BJ (cell line): ENCODE measurements at regions of chr11 and their contacts with region 1.

Region 1: GRCh38 chr11:73661035-73661628 is 14.8 kb downstream of the PLEKHB1 start:
- DNase-seq: peak; percentile 20
- H3K4me3 ChIP-seq: peak overlapping the region; percentile 40
- H3K27me3 ChIP-seq: no peaks in the 10 kb centered on the region
- CTCF ChIP-seq: peak; percentile 96

Region 2: DNA sequence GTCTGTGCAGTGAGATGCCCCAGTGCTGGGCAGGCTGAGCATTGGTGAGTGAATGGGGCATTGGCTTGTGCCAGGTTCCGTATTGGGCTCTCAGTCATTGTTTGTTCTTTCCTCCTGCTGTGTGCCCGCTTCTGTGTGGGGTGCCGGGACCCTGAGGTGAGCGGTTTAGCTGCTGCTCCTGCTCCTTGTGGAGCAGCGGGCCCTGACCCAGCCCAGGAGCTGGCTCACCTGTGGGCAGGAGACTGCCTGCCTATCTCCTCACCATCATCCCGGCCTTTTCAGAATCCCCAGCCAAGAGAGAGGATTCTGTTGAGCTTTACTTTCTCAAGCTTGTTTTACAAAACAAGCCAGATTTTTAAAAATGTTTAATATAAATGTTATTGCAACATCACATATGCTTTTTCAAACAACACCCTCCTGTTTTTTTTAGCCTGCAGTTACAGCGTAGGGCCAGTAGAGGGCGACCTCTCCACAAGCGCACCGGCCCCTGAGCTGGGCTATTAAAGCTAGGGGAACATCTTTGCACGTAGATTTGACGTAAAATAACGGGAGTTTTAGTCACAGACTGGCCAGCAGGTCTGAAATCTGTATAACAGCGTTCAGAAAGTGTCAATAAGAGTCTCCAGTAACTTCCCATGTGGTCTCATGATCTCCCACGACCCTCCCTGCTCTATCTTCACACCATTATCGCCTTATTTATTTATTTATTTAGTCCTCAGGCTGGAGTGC is 310.1 kb before region 1 on chr11:
- CTCF ChIA-PET with region 1: interaction called, 33 read pairs
- POLR2A ChIA-PET with region 1: no interaction called
- DNase-seq: no peak
- H3K4me3 ChIP-seq: no peak overlapping the region
- H3K27me3 ChIP-seq: no peaks in the 10 kb centered on the region
- CTCF ChIP-seq: peak; percentile 100

Region 3: DNA sequence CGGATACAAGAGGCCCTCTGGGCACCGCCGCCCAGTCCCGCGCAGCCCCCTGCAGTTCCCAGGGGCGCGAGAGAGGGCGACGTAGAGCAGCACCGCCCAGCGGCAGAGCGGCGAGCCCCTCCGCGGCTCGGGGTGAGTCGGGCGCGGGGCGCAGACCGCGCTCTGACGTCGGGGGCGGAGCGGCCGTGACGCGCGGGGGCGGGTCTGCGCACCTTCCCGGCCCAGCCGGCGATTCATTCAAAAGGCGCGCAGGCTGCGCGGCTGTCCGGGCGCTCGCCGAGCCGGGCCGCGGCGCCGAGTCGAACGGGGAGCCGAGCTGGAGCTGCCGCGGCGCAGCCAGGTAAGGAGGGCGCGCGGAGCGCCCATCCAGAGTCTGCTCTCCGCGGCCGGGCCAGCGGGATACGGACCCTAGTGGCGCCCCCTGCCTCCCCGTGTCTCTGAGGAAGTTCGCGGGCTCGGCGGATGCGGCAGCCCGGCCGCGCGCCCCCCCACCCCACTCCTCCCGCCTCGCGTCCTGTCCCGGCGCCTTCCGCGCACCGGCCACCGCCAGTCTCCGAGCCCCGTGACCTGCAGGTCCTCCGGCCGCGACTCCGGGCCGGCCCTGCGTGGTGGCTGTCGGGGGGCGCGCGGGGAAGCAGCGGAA is 284.9 kb before region 1 on chr11 and contains the start of gene RELT:
- CTCF ChIA-PET with region 1: interaction called, 11 read pairs
- POLR2A ChIA-PET with region 1: no interaction called
- DNase-seq: peak; percentile 34
- H3K4me3 ChIP-seq: peak within 1 kb of the TSS; percentile 70
- H3K27me3 ChIP-seq: no peaks in the 10 kb centered on the region
- CTCF ChIP-seq: peak; percentile 80
- polyA plus RNA-seq, gene RELT: 2.4 and 3.7 TPM in 2 replicates

Region 4: GRCh38 chr11:73393479-73394380 is 267.4 kb before region 1 on chr11:
- CTCF ChIA-PET with region 1: interaction called, 100 read pairs
- POLR2A ChIA-PET with region 1: no interaction called
- DNase-seq: no peak
- H3K4me3 ChIP-seq: no peak overlapping the region
- H3K27me3 ChIP-seq: no peaks in the 10 kb centered on the region
- CTCF ChIP-seq: peak; percentile 88

Region 5: DNA sequence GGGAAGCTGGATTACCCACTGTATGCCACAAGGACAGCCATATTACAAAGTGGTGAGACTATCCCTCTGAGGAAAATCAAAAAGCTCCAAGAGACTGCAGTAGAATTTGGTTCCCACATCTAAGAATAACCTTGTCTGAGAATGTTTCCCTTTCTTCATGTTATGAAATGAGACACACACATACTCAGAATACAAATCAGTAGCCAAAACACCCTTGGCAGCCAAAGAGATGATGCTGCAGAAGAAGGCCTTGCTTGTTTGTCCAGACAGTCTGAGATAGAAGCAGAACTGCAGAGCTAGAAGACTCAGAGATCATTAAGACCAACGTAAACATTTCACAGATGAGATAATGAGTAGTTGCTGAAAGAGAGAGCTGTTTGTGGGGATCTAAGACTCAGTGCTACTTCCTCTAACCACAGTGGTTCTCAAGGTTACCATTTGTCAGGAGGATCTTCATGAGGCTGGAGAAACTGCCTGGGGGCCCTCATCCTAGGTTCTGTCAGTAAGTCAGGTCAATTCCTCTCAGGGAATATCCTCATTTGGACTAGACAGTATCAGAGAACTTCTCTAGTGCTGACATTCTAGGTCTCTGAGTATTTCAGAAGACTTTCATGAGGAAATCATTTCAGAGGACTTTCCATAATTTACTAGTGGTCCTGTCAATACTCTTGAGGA is 246.0 kb before region 1 on chr11:
- CTCF ChIA-PET with region 1: interaction called, 14 read pairs
- POLR2A ChIA-PET with region 1: no interaction called
- DNase-seq: peak; percentile 39
- H3K4me3 ChIP-seq: no peak overlapping the region
- H3K27me3 ChIP-seq: no peaks in the 10 kb centered on the region
- CTCF ChIP-seq: no peak

Region 6: DNA sequence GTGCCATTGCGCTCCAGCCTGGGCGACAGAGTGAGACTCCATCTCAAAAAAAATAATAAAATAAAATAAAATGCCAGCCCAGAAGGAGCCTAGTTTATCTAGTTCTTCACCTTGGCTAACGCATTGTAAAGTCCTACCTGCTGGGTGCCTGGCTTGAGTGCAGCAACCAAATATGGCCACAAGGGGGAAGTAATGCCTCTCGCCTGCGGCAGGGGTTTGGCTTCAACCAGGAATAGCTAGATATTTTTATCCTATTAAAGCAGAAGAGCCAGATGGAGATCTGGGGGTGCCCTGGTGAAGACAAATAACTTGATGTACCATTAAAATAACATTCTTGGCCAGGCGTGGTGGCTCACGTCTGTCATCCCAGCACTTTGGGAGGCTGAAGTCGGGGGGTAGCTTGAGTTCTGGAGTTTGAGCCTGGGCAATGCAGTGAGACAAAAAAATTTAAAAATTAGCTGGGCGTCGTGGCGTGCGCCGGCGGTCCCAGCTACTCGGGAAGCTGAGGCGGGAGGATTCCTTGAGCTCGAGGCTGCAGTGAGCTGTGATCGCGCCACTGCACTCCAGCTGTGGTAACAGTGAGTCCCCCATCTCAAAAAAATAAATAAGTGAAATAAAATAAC is 35.3 kb before region 1 on chr11:
- CTCF ChIA-PET with region 1: interaction called, 77 read pairs
- POLR2A ChIA-PET with region 1: no interaction called
- DNase-seq: peak; percentile 16
- H3K4me3 ChIP-seq: 0 out of 2 replicates have a peak overlapping the region, but pooled peaks have one; percentile 11
- H3K27me3 ChIP-seq: peaks cover 9% of the 10 kb centered on the region
- CTCF ChIP-seq: peak; percentile 92

Region 7: GRCh38 chr11:73671701-73672100 is 10.6 kb after region 1 on chr11:
- CTCF ChIA-PET with region 1: interaction called, 16 read pairs
- POLR2A ChIA-PET with region 1: no interaction called
- DNase-seq: no peak
- H3K4me3 ChIP-seq: no peak overlapping the region
- H3K27me3 ChIP-seq: no peaks in the 10 kb centered on the region
- CTCF ChIP-seq: no peak